ENCODE measurements at regions of chr2 and their contacts with region 1.

Region 1: DNA sequence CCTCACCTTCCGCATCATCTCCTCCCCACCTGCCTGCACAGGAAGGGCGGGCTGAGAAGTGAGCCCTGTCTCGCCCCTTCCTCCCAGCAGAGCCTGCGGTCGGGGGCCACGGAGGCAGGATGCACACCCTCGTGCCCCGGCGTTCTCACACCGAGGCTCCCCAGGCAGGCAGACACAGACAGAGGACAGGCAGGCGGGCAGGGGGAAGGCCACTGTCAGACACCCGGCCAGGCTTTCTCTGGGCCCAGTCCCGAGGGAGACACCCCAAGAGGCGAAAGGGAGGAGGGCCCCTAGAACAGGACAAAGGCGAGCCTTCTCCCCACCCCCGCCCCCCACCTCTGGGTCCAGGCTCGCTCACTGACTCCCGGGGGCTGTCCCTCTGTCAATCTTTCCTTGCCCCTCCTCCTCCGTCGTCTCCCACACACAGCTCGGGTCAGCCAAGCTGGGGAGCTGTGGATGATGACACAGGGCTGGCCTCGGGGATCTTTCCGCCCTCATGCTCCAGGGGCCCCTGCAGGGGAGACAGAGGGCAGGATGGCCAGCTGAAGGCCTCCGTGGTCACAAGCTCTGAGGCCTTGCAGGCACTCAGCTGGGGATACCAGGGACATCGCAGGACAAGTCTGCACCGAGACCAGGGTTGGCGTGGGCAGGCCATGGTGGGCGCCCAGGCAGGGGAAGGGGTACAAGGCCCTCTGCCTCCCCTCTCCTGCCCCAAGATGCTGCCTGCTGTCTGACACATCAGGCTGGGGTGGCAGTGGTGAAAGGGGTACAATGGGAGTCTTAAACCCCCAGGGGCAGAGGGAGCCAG is 24.9 kb downstream of the BIN1 start:
- DNase-seq: peak; percentile 60 to 92 (median 82)
- ATAC-seq: peak; percentile 80
- H3K4me3 Mint-ChIP-seq: peak overlapping the region; percentile 87 to 95 (median 92)
- H3K27ac Mint-ChIP-seq: peak overlapping the region; percentile 96 to 100 (median 98)
- H3K4me1 Mint-ChIP-seq: peaks cover 62 to 97% (median 90%) of the 10 kb centered on the region in 4 donors
- H3K27me3 Mint-ChIP-seq: no peaks in the 10 kb centered on the region

Region 2: GRCh38 chr2:127067620-127068350 is 14.2 kb before region 1 on chr2:
- POLR2A ChIA-PET with region 1: interaction called, 19 read pairs
- DNase-seq: peak; percentile 39 to 85 (median 67)
- ATAC-seq: peak; percentile 80
- H3K4me3 Mint-ChIP-seq: peak overlapping the region in 1 of 10 donors; percentile 19
- H3K27ac Mint-ChIP-seq: peak overlapping the region; percentile 27 to 86 (median 76)
- H3K4me1 Mint-ChIP-seq: peaks cover 30 to 44% (median 39%) of the 10 kb centered on the region in 4 donors
- H3K27me3 Mint-ChIP-seq: no peaks in the 10 kb centered on the region

Region 3: DNA sequence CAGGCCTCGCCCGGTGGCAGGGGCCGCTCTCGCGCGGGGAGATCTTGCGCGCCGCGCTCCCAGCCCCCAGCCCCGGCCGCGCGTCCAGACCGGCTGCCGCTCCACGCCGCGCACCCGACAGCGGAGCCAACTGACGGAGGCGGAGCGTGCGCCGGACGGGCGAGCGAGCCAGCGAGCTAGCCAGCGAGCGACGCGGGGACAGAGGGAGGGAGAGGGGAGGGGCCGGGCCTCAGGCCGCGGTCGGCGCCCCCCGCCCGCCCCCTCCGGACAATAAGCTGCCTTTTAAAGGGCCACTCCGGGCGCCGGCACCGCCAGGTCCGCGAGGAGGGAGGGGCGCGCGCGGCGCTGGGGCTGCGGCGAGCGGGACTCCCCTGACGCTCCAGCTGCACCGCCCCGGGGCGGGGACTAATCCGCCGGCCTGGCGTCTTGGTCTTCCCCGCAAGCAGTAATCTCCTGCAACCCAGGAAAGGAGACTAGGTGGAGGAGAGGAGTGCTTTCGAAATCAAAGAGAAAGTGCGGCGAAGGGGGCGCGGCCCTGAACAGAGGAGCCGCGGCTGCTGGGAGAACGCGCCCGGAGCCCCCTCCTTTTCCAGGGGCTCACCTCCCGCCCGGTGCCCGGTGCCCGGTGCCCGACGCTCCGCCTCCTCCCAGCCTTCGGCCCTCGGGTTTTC is 25.1 kb after region 1 on chr2 and contains the start of gene BIN1:
- POLR2A ChIA-PET with region 1: interaction called, 35 read pairs
- DNase-seq: peak in 9 of 10 donors; percentile 27 to 63 (median 55)
- ATAC-seq: peak; percentile 86 to 88
- H3K4me3 Mint-ChIP-seq: peak within 1 kb of the TSS; percentile 81 to 96 (median 90)
- H3K27ac Mint-ChIP-seq: peak within 1 kb of the TSS in 5 of 10 donors; percentile 27 to 70 (median 35)
- H3K4me1 Mint-ChIP-seq: peaks cover 8 to 10% (median 9%) of the 10 kb centered on the region in 4 donors
- H3K27me3 Mint-ChIP-seq: peaks cover 0 to 7% (median 1%) of the 10 kb centered on the region in 5 donors
- polyA plus RNA-seq, gene BIN1: 156 to 189 (median 167) TPM

Region 4: DNA sequence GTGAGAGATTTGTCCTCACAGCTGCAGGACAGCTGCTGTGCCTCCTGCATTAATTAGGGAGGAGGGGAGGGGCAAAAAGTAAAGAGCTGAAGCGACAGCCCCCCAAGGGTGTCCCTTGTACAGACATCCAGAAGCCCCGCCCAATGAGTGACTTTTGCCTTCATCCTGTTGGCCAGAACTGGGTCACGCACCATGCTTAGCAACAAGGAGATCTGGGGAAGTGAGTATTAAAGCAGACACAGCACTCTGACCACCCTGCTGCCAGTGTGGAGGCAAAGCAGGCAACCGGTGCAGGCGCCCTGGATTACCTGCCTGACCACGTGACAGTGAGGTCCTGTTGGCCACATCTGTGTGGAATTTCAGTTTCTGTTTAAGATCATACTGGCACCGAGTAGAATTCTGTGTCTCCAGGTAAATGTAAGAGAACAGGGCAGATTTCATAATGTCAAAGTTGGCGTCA is 46.4 kb after region 1 on chr2:
- POLR2A ChIA-PET with region 1: no interaction called
- DNase-seq: no peak
- ATAC-seq: peak in 1 of 2 donors; percentile 39
- H3K4me3 Mint-ChIP-seq: peak overlapping the region in 3 of 10 donors; percentile 19 to 30 (median 26)
- H3K27ac Mint-ChIP-seq: peak overlapping the region in 1 of 10 donors; percentile 23
- H3K4me1 Mint-ChIP-seq: peaks cover 0 to 18% (median 2%) of the 10 kb centered on the region in 4 donors
- H3K27me3 Mint-ChIP-seq: peaks cover 0 to 4% (median 0%) of the 10 kb centered on the region in 5 donors

Measured in naive thymus-derived CD8-positive, alpha-beta T cell (primary cell).